Right ventricle myocardium inferior (tissue), 1 donor: ENCODE measurements at regions of chr1 and their contacts with region 1.

Region 1: DNA sequence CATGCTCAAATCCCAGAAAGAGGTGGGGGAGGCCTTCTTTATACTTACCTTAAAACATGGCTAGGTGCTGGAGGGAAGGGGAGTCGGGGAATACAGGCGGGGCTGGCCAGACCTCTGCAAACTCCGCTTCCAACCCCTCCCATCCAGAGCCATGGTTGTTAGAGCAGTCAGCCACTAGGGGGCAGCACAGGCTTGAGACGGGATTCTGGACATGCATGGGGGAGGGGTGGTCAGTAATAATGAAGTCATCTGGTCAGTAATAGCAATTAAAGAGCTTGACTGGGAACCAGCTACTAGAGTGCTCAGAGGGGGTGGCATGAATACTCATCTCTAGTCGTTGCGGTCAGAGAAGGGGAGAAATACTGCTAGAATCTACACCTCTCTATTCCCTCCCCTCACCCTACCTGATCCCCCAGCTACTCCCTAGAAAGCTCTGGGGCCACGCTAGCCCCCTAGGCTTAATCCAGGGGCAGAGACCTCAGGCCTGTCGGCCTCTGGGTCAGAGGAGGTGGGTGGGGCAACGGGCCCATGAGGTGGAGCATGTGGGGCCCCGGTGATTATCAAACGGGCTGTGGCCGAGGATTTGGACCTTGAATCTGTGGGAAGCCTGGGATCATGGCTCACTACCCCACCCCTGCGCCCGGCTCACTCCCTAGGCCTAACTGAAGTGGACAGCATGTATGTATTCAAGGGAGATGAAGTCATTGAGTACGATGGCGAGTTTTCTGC is 2.9 kb downstream of the CASQ1 start:
- DNase-seq: peak; percentile 90
- ATAC-seq: peak; percentile 87

Region 2: DNA sequence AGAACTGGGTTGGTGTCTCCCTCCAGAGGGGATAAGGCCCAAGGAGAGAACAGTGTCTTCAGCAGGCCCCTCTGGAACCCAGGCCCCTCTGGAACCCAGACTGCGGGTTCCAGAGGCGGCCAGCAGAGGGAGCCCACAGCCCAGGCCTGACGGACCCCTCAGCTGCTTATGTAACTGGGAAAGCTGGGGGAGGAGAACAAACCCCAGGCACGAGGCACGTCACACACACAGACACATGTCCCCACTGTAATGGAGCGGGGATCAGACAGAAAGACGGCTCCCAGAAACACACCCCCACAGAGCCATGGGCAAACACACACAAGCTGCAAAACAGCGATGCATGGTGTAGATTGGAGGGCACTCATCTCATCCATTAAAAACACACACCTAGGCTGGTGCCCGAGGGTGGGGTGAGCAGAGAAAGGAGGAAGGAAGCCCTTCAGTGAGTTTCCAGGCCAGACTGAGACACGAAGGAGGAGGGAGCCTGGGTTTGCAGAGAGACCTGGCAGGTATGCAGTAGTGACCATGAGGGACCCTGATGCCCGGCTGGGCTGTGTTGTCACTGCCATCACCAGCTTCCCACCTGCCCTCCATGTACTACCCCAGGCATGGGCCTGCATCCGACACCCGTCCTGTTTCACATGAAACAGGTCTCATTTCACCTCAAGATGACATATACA is 92.1 kb before region 1 on chr1:
- intact Hi-C with region 1: loop called (anchors 1 kb)
- DNase-seq: peak; percentile 89
- ATAC-seq: peak; percentile 38

Region 3: DNA sequence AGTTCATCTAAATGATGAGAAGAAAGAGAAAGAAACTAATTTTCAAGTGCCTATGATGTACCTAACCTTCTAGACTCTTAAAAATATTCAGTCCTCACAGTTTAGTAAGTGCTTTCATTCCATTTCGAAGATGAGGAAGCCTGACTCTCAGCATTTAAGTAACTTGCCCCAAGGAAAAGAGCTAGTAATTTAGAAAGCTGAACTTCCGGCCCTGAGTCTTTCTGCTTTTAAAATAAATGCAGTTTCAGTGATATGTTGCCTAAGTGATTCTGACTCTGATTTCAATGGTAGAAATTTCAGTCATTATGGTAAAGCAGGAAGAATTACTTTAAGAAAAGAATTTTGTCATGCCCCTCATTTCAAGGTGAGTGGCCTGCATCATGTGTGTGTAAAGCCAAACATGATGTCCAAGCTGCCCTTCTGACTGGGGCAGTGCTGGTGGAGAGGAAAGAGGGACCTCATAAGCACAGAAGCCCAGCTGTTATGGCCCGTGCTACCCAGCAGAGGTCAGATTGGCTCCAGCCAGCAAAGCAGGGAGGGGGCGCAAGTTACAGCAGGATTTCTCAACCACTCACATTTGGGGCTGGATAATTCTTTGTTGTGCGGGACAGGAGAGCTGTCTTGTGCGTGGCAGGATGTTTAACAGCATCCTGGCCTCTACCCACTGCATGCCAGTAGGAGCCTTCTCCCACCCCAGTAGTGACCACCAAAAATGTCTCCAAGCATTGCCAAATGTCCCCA is 31.1 kb before region 1 on chr1:
- intact Hi-C with region 1: loop called (anchors 2 kb)
- DNase-seq: no peak
- ATAC-seq: peak; percentile 43

Region 4: DNA sequence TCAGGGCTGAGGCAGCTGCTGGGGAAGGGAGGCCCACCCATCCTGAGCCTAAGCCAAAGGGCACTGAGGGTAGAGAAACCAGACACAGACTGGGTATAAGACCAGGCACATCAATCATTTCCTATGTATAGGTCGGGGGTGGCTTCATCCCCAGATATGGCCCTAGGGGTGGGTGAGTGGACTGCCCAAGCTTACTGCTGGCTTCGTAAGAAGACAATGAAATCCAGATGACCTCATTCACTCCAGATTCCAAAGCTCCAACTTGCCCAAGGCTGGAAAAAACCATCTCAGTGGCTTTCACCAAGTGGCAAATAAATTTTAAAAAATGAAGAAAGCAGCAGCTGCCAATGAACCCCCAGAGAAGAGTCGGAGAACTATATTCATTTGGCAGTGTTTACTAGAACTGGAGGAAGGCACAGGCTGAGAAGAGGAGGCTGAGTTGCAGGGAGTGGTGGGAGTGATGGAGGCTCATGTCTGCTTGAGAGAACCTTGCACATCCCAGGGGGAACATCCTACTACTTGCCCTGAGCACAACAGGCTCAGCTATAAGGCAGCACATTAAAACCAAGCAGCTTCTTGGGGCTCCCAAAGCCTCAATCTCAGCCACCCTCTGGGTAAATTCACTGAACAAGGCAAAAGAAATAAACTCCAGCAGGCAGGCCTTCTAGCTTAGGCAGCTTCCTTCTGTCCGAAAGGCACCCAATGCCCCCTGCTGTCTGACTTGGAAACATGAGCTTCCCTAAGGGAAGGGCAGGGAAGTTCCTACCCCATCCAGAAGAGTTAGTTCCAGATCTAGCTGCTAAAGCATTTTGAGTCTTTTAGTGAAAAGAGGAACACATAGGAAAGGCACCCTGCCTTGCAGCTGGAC is 26.0 kb after region 1 on chr1:
- intact Hi-C with region 1: loop called (anchors 1 kb)
- DNase-seq: no peak
- ATAC-seq: peak; percentile 84

Region 5: DNA sequence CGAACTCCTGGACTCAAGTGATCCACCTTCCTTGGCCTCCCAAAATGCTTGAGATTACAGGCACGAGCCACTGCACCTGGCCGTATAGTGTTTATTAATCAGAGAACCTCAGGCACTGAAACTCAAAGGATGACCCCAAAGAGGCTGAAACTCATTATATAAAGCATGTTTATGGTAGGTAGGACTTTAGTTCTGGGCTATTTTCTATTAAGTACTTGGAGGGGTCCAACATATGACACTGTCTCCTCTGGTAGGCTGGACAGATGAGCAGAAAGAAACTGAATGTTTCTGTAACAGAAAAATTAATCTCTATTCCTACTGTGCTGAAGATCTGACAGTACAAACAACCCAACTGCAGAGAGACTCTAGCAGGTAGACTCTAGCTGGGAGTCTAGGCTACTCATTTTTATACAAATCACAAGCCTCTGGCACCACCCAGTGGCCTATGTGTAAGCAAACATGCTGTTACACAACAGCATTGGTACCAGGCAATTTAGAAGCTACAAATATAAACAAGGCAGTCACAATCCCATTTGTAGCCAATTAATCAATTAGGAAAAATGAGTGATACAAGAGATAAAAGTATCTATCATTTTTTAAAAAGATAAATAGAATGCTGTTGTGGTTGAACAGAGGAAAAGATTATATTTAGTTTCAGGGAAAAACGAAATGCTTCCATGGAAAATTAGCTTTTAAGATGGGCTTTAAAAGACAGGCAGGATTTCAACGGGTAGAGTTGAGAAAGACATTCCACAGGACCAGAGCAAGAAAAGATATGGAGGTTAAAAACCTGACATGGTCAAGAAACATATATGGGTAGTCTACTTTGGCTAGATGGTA is 58.7 kb after region 1 on chr1:
- intact Hi-C with region 1: loop called (anchors 2 kb)
- DNase-seq: no peak
- ATAC-seq: peak; percentile 94

Region 6: DNA sequence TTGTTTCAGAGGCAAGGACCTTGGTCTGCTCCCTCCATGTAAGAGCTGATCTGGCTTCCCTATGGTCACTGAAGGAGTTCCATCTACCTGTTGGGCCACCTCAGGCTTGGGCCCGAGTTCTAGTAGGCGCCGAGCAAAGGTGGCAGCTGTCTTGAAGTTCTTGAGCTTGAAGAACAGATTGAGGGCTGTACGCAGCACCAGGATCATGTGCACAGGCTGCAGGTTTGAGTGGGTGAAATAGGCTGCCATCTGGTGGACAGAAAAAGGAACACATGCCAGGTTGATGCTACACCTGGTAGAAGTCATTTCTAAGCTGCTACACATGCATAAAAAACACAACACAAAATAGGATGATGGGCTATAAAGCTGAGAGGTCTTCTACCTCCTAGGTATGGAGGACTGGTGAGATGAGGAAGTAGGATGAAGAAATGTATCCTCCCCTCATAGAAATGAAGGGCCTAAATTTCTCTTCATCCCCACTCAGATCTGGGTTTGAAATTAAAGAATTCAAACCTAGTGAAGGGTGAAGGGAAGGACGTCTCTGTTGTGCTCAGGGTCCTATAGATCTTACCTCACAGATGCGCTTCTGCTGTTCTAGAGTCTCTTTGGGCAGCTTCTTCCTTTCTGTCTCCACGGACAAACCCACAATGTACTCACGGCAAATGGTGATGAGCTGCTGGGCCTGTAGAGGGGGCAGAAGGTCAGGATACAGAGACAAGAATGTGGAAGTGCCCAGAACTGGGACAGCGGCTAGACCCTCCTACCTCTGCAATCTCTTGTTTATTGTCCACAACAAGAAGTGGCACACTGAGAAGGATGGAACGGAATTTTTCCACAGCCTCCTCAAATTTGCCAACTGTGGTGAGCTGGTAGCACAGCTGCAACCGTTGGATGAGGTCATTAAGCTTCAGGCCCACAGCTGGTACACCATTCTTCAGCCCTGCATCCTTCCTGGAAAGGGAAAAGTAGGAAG is 98.3 kb after region 1 on chr1:
- intact Hi-C with region 1: loop called (anchors 1 kb)
- DNase-seq: no peak
- ATAC-seq: peak; percentile 85

Region 7: DNA sequence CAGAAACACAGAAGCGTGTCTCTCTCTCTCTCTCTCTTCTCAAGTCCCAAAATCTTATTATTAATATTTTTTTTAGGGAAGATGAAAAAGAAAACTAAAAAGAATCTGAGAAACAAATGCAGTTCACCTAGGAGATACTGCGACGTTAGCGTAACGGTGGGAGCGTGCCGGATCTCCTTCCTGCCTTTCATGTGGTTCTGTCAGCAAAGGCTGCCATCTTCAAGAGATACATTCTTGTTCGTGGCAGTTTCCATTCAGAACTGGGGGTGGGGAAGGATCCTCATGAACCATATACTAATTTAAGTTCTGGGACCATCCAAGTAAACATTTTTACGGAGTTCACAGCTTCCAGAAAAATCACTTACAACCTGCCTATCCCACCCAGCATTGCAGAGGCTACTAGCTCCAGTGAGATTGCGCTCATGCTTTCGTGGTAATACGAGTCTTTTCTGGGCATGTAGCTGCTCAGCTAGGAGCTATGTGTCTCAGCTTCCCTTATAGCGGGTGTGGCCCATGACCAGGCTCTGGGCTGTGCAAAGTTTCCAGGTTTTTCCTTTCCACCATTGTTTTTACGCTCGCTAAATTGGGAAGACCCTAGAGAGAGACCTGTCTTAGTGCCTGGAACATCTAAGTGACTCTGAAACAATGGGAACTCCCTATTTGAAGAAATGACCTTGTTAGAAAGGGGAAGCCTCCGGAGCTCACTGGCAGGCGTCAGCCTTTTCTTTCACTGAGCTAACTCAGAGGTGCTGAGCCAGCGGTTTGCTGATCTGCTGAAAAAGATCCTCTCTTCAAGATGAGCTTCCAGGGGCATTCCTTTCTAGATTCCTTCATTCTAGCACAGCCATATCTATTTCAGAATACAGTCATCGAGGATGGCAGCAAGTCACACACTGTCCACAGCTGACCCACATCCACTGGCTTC is 436.3 kb after region 1 on chr1:
- intact Hi-C with region 1: no loop called
- DNase-seq: peak; percentile 76
- ATAC-seq: peak; percentile 31